Prostate gland (tissue), 2 donors: ENCODE measurements at regions of chr19 and their contacts with region 1.

Region 1: GRCh38 chr19:41308392-41309179 is 1.4 kb upstream of the CCDC97 start:
- DNase-seq: peak; percentile 92
- H3K4me3 ChIP-seq: peak overlapping the region in 1 of 2 donors; percentile 78
- H3K27ac ChIP-seq: peak overlapping the region; percentile 95 to 96
- H3K4me1 ChIP-seq: peaks cover 14% of the 10 kb centered on the region
- H3K27me3 ChIP-seq: no peaks in the 10 kb centered on the region
- CTCF ChIP-seq: peak; percentile 96 to 98 (median 97)
- POLR2A ChIP-seq: peak; percentile 13

Region 2: DNA sequence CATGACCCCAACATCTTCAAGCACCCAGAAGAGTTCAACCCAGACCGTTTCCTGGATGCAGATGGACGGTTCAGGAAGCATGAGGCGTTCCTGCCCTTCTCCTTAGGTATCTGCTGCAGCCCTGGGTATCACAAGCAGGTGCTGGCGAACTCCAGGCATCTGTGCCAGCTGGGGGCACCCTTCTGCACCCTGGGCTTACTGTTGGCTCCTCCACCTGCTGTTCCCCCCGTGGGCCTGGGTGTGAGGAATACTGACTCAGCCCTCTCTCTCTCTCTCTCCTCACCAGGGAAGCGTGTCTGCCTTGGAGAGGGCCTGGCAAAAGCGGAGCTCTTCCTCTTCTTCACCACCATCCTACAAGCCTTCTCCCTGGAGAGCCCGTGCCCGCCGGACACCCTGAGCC is 102.6 kb before region 1 on chr19:
- intact Hi-C with region 1: loop called (anchors 2 kb)
- DNase-seq: no peak
- H3K4me3 ChIP-seq: no peak overlapping the region
- H3K27ac ChIP-seq: no peak overlapping the region
- H3K4me1 ChIP-seq: no peaks in the 10 kb centered on the region
- H3K27me3 ChIP-seq: no peaks in the 10 kb centered on the region
- CTCF ChIP-seq: no peak
- POLR2A ChIP-seq: no peak

Region 3: DNA sequence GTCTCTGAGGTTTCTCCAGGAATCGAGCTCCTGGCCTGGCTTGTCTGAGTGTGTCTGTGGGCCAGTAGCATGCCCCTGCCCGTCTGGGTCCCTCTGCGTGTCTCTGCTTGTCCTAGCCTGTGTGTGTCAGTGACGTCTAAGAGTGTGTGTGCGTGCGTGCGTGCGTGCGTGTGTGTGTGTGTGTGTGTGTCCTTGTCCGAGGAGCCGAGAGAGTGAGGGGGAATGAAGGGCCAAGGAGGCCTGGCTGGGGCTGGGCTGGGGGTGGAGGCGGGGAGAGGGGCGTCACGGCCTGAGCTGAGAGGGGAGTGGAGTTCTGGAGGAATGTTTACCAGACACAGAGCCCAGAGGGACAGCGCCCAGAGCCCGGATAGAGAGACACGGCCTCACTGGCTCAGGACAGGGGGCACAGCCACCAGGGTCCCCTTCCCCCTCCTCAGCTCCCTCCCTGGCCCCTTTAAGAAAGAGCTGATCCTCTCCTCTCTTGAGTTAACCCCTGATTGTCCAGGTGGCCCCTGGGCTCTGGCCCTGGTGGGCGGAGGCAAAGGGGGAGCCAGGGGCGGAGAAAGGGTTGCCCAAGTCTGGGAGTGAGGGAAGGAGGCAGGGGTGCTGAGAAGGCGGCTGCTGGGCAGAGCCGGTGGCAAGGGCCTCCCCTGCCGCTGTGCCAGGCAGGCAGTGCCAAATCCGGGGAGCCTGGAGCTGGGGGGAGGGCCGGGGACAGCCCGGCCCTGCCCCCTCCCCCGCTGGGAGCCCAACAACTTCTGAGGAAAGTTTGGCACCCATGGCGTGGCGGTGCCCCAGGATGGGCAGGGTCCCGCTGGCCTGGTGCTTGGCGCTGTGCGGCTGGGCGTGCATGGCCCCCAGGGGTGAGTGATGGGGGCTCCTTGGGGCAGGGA is 89.7 kb before region 1 on chr19 and contains the start of gene AXL:
- intact Hi-C with region 1: loop called (anchors 5 kb)
- DNase-seq: peak; percentile 88
- H3K4me3 ChIP-seq: peak within 1 kb of the TSS; percentile 44 to 52
- H3K27ac ChIP-seq: peak within 1 kb of the TSS; percentile 88 to 91
- H3K4me1 ChIP-seq: no peaks in the 10 kb centered on the region
- H3K27me3 ChIP-seq: no peaks in the 10 kb centered on the region
- CTCF ChIP-seq: no peak
- POLR2A ChIP-seq: peak; percentile 68
- total RNA-seq, gene AXL: 26.1 to 168 TPM

Region 4: GRCh38 chr19:41263850-41264580 is 44.6 kb before region 1 on chr19 and contains the start of gene HNRNPUL1:
- intact Hi-C with region 1: loop called (anchors 2 kb)
- DNase-seq: peak; percentile 100
- H3K4me3 ChIP-seq: peak within 1 kb of the TSS; percentile 95 to 97
- H3K27ac ChIP-seq: peak within 1 kb of the TSS; percentile 99 to 100
- H3K4me1 ChIP-seq: peaks cover 19% of the 10 kb centered on the region
- H3K27me3 ChIP-seq: no peaks in the 10 kb centered on the region
- CTCF ChIP-seq: peak in 2 of 4 experiments; percentile 2 to 48
- POLR2A ChIP-seq: peak; percentile 42
- total RNA-seq, gene HNRNPUL1: 133 to 183 TPM